Heart left ventricle (tissue), 16 donors: ENCODE measurements at regions of chr7 and their contacts with region 1.

Region 1: DNA sequence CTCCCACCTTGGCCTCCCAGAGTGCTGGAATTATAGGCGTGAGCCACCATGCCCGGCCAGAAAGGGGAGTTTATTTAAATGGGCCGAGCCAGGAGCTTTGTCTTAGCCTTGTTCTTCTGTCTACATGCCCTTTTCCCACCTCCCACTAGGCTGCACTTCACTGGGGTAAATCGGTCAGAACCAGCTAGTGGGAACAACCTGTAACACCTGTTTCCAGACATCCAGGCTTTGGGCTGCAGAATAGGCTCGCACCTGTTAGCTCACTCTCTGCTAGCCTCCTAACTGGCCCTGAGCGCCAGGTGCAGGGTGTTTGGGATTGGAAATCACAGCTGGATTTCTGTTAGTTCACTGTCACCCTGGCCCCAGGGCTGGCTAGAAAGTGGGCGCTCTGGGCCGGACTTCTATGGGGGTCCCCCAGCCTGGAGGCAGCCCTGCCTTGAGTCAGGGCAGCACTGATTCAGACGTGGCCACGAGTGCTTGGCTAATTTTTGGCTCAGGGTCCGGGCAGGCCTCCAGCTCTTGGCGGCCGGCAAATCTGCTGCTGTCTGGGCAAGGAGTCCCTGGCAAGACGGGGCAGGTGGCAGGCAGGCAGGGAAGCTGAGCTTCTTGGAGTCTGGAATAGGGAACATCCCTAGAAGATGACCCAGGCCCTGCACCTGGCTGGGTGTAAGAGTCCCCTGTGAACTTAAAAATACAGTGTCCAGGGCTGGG is 48.6 kb downstream of the GTF2IRD1 start:
- DNase-seq: peak; percentile 47 to 80 (median 62)
- ATAC-seq: peak; percentile 49 to 66 (median 55)
- H3K4me3 ChIP-seq: no peak overlapping the region
- H3K27ac ChIP-seq: peak overlapping the region in 11 of 12 donors; percentile 16 to 90 (median 71)
- H3K4me1 ChIP-seq: peaks cover 0 to 24% (median 7%) of the 10 kb centered on the region in 12 donors
- H3K27me3 ChIP-seq: no peaks in the 10 kb centered on the region
- CTCF ChIP-seq: no peak
- POLR2A ChIP-seq: no peak

Region 2: GRCh38 chr7:74455291-74455804 is 47.0 kb before region 1 on chr7:
- intact Hi-C with region 1: loop called in 3 of 10 experiments (anchors 5 to 10 kb)
- DNase-seq: peak; percentile 35 to 68 (median 63)
- ATAC-seq: peak; percentile 61 to 69 (median 66)
- H3K4me3 ChIP-seq: peak overlapping the region; percentile 66 to 97 (median 78)
- H3K27ac ChIP-seq: peak overlapping the region; percentile 68 to 97 (median 86)
- H3K4me1 ChIP-seq: peaks cover 0 to 30% (median 13%) of the 10 kb centered on the region in 12 donors
- H3K27me3 ChIP-seq: peaks cover 0 to 3% (median 0%) of the 10 kb centered on the region in 9 donors
- CTCF ChIP-seq: no peak
- POLR2A ChIP-seq: peak in 1 of 2 donors; percentile 65

Region 3: DNA sequence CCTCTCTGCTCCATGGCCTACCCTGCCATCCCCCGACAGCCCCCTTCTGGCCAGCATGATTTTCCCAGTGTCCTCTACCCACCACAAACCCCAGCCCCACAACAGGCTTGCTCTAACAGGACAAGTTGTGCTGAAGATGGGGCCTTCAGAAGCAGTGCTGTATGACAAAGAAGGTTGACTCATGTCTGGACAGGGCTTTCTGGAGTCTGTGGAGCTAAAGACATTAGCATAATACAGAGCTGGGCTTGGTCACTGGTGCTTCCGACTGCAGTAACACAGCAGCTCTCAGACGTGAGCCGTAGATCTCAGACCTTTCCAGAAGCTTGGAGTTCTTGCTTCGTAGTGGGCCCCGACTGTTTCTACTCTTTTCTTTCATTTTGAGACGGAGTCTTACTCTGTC is 51.8 kb after region 1 on chr7:
- intact Hi-C with region 1: no loop called
- DNase-seq: no peak
- ATAC-seq: peak in 1 of 4 donors; percentile 2
- H3K4me3 ChIP-seq: no peak overlapping the region
- H3K27ac ChIP-seq: peak overlapping the region in 11 of 12 donors; percentile 16 to 88 (median 58)
- H3K4me1 ChIP-seq: peaks cover 0 to 11% (median 3%) of the 10 kb centered on the region in 12 donors
- H3K27me3 ChIP-seq: no peaks in the 10 kb centered on the region
- CTCF ChIP-seq: no peak
- POLR2A ChIP-seq: no peak

Region 4: DNA sequence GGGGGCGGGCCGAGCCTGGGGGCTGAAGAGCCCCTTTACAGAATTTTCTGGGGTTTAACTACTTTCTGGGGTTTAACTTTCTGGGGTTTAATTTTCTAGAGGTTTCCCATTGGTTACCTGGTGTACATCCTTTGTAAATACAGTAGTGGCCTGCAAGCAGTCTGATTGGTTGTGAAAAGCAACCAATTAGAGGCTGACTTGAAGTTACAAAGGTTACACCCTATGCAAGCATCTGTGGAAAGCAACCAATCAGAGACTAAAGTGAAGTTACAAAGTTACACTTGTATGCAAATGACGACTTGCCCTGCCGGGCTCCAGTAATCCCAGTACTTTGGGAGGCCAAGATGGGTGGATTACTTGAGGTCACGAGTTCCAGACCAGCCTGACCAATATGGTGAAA is 182.6 kb after region 1 on chr7:
- intact Hi-C with region 1: no loop called
- DNase-seq: no peak
- ATAC-seq: no peak
- H3K4me3 ChIP-seq: no peak overlapping the region
- H3K27ac ChIP-seq: no peak overlapping the region
- H3K4me1 ChIP-seq: peaks cover 0 to 24% (median 2%) of the 10 kb centered on the region in 12 donors
- H3K27me3 ChIP-seq: no peaks in the 10 kb centered on the region
- CTCF ChIP-seq: no peak
- POLR2A ChIP-seq: no peak